ENCODE measurements at regions of chr7 and their contacts with region 1.

Region 1: DNA sequence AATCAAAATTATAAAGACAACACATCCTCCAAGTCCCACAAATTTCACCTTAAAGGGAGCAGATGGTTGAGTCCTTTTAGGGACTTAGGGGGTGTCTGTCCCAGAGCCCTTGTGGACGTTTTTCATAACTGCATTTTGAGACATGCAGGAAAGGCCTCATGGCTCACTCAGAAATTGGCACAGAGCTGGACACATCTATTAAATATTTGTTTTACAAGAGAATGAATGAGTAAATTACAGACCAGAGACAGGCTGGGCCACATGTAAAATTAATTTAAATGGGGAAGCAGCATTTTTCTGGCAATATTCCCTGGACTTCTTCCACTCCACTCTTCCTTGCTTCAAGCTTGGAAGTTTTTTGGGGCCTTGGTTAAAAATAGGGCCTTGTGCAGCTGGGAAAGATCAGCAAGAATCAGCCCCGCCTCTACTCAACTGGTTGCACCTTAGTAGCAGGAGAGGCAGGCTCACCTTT is 20.0 kb downstream of the LAMB1 start:
- DNase-seq: no peak
- H3K4me3 ChIP-seq: no peak overlapping the region
- CTCF ChIP-seq: peak; percentile 37

Region 2: GRCh38 chr7:107934991-107935770 is 47.8 kb before region 1 on chr7:
- in situ Hi-C with region 1: loop called (anchors 5 kb)
- DNase-seq: peak; percentile 82
- H3K4me3 ChIP-seq: no peak overlapping the region
- CTCF ChIP-seq: no peak

Region 3: DNA sequence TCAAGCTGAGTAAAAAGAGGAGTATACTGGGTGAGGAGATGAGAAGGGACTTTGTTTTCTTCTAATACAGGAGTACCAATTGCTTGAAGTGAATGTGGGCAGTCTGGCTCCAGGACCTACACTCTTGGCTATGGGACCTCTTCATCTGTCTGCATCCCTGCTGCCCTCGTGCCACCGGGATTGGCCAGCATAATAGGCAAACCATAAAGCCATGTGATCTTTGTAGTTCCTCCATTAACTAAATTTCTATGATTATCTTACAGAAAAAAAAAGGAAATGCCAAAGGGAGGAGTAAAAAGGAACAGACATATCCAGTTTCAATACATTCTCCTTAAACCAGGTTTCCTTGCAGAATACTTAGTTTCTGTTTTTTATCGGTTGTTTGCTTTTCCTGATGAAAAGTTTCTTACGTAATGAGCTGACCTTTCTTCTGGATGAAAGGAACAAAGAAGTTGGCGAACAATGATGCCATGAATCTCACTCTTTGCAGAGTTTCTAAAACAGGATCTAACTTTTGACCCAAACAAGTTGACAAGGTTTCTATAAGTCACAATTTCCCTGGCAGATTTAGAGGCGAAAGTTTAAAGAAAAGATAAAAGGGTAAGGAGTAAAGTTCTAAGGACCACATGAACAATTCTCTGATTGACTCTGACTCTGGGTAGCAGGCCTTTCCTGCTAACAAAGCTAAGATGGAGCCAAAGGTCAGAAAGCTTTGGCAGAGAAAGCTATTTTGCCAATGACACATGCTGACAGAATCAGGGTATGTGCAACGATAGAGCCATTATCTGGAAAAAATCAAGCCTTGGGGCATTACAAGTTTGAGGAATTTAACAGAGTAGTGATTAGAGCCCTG is 34.1 kb before region 1 on chr7:
- in situ Hi-C with region 1: no loop called
- DNase-seq: peak; percentile 76
- H3K4me3 ChIP-seq: no peak overlapping the region
- CTCF ChIP-seq: no peak

Region 4: DNA sequence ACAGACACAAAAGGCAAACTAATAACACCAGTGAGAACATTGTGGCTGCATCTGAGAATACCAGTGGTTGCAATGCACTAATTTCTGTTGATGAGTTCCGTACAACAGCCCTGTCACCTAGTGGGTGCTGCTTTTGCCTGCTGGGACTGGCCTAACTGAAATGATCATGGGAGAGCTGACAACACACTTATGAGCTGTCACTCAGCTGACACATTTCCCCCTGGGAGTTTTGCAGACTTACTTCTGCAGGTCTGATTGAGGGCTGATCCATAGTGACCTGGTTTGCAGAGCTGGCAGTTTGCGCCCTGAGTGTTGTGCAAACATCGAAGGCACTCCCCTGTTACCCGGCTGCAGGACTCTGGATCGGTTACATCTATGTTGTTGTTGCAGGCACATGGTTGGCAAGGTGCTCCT is 80.6 kb after region 1 on chr7:
- in situ Hi-C with region 1: no loop called
- DNase-seq: no peak
- H3K4me3 ChIP-seq: no peak overlapping the region
- CTCF ChIP-seq: no peak

Measured in astrocyte of the cerebellum (primary cell).